Heart left ventricle (tissue), 16 donors: ENCODE measurements at regions of chr7 and their contacts with region 1.

Region 1: DNA sequence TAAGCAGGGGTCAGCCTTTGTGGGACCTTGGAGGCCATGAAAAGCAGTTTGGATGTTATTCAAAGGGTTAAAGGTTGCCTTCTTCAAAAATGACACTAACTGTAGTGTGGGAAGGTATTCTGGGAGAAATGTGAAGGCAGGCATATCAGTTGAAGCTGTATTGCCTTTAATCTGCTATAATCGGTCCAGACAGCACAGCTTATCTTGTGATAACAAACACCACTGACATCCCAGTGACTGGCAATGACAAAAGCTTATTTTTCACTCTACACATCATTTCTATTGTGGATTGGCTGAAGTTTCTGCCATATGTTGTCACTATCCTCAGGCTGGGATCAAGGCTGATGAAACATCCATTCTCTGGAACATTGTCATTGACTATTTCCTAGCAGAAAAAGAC is 1149.2 kb downstream of the GRM8 start:
- DNase-seq: no peak
- ATAC-seq: no peak
- H3K4me3 ChIP-seq: no peak overlapping the region
- H3K27ac ChIP-seq: no peak overlapping the region
- H3K4me1 ChIP-seq: no peaks in the 10 kb centered on the region
- H3K27me3 ChIP-seq: no peaks in the 10 kb centered on the region
- CTCF ChIP-seq: no peak
- POLR2A ChIP-seq: no peak

Region 2: GRCh38 chr7:125934539-125934938 is 169.0 kb before region 1 on chr7:
- intact Hi-C with region 1: no loop called
- DNase-seq: no peak
- ATAC-seq: no peak
- H3K4me3 ChIP-seq: no peak overlapping the region
- H3K27ac ChIP-seq: no peak overlapping the region
- H3K4me1 ChIP-seq: no peaks in the 10 kb centered on the region
- H3K27me3 ChIP-seq: no peaks in the 10 kb centered on the region
- CTCF ChIP-seq: no peak
- POLR2A ChIP-seq: no peak

Region 3: DNA sequence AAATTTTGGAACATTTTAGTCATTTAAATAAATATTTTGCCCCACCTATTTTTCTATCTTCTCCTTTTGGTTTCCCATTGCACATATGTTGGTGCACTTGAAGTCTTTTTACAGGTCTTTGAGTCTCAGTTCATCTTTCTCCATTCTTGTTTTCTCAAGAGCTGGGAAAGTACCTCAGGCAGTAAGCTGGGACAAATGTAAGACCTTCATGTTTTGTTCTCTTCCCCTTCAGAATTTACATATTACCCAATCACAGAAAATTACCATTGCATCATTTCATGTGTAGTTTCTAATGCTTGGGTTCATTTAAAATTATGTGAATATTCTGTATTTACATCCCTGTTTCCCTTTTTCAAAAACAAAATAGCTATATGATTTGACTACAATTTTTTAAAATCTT is 24.0 kb before region 1 on chr7:
- intact Hi-C with region 1: loop called in 1 of 10 experiments (anchors 1 kb)
- DNase-seq: no peak
- ATAC-seq: no peak
- H3K4me3 ChIP-seq: no peak overlapping the region
- H3K27ac ChIP-seq: no peak overlapping the region
- H3K4me1 ChIP-seq: no peaks in the 10 kb centered on the region
- H3K27me3 ChIP-seq: no peaks in the 10 kb centered on the region
- CTCF ChIP-seq: no peak
- POLR2A ChIP-seq: no peak

Region 4: GRCh38 chr7:126119981-126120380 is 16.4 kb after region 1 on chr7:
- intact Hi-C with region 1: no loop called
- DNase-seq: no peak
- ATAC-seq: no peak
- H3K4me3 ChIP-seq: no peak overlapping the region
- H3K27ac ChIP-seq: no peak overlapping the region
- H3K4me1 ChIP-seq: no peaks in the 10 kb centered on the region
- H3K27me3 ChIP-seq: no peaks in the 10 kb centered on the region
- CTCF ChIP-seq: no peak
- POLR2A ChIP-seq: no peak